GM13977 (cell line): ENCODE measurements at regions of chr10 and their contacts with region 1.

Region 1: GRCh38 chr10:131874991-131875451 is 25.8 kb upstream of the PPP2R2D start:
- DNase-seq: peak; percentile 87
- CTCF ChIP-seq: peak; percentile 89

Region 2: DNA sequence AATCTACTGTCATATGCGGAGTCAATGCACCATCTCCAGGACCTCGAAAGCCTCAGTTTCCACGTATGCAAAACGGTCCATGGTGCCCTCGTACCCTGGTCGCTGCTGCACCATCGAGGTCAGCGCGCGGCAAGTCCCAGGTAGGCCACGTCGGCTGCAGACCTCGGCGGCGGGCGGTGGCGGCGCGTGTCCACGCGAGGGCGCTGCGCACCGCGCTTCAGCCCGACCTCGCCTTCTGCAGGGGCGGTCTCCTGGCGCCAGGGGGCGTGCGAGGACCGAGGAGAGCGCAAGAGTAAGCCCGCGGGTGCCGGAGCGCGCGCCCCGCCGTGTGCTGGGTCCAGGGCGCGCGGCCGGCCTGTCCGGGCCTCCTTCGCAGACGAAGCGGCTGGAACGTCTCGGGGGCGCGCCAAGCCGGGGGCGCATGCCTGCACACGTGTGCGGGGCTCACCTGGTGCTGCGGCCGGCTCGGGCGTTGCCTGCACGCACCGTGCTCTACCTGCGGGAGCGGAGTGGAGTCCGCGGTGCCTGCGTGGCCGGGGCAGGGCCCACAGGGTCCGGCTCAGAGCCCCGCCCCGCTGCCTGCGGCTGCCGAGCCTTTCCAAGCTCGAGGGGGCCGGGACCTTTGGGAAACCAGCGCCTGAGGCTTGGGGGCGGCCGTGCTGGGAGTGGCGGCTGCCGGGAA is 1684.8 kb before region 1 on chr10:
- in situ Hi-C with region 1: loop called (anchors 25 kb)
- DNase-seq: peak; percentile 97
- CTCF ChIP-seq: peak; percentile 100

Region 3: GRCh38 chr10:131825150-131825848 is 49.7 kb before region 1 on chr10:
- in situ Hi-C with region 1: no loop called
- DNase-seq: no peak
- CTCF ChIP-seq: no peak

Region 4: DNA sequence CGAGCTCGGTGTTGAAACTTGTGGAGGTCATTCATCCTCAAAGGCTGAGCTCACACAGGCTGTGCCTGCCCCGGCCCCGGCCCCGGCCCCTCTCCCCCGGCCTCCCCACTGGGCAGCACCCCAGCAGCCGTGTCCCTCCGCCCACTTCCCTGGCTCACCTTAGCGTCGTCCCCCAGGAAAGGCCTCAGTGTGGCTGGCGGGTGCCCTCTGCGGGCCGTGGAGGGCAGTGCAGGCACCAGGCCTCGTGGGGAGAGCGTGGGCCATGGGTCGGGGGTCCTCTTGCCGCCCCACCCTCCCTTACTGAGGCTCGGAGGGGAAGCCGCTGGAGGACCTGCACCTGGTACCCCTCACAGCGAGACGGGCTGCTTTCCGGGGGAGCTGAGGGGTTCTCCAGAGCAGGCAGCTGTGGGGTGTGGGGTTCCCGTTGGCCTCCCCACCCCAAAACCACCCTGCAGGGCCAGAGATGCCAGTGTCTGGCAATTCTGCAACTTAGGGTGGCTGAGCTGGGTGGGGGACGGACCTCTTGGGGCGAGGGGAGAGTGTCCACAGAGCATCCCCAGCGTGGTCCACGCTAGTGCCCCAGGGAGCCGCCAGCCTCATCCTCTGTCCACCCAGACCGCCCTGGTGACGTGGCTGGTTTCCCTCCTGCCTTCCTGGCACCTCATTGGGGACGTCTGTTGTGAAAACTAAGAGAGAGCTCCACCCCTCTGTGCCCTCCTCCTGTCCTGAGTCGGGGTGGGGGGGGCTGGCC is 267.6 kb after region 1 on chr10:
- in situ Hi-C with region 1: loop called (anchors 25 kb)
- DNase-seq: peak; percentile 89
- CTCF ChIP-seq: peak; percentile 88